ENCODE measurements at regions of chr9 and their contacts with region 1.

Region 1: GRCh38 chr9:1837449-1838084 is 177.6 kb upstream of the SMARCA2 start:
- DNase-seq: peak; percentile 55 to 61
- H3K4me3 ChIP-seq: no peak overlapping the region
- H3K4me3 Mint-ChIP-seq: no peak overlapping the region
- H3K27ac Mint-ChIP-seq: no peak overlapping the region
- H3K4me1 ChIP-seq: no peaks in the 10 kb centered on the region
- H3K4me1 Mint-ChIP-seq: no peaks in the 10 kb centered on the region
- H3K27me3 ChIP-seq: no peaks in the 10 kb centered on the region
- H3K27me3 Mint-ChIP-seq: peaks cover 2% of the 10 kb centered on the region
- CTCF ChIP-seq: peak; percentile 58 to 66

Region 2: GRCh38 chr9:1709345-1709744 is 128.2 kb before region 1 on chr9:
- CTCF ChIA-PET with region 1: no interaction called
- POLR2A ChIA-PET with region 1: no interaction called
- intact Hi-C with region 1: loop called (anchors 1 kb)
- DNase-seq: peak in 1 of 2 experiments; percentile 13
- H3K4me3 ChIP-seq: no peak overlapping the region
- H3K4me3 Mint-ChIP-seq: no peak overlapping the region
- H3K27ac Mint-ChIP-seq: no peak overlapping the region
- H3K4me1 ChIP-seq: no peaks in the 10 kb centered on the region
- H3K4me1 Mint-ChIP-seq: no peaks in the 10 kb centered on the region
- H3K27me3 ChIP-seq: no peaks in the 10 kb centered on the region
- H3K27me3 Mint-ChIP-seq: peaks cover 7% of the 10 kb centered on the region
- CTCF ChIP-seq: peak in 1 of 2 experiments; percentile 58

Region 3: GRCh38 chr9:1726993-1727759 is 110.4 kb before region 1 on chr9:
- CTCF ChIA-PET with region 1: interaction called, 22 read pairs
- POLR2A ChIA-PET with region 1: no interaction called
- intact Hi-C with region 1: loop called (anchors 1 kb)
- DNase-seq: peak; percentile 26 to 34
- H3K4me3 ChIP-seq: no peak overlapping the region
- H3K4me3 Mint-ChIP-seq: no peak overlapping the region
- H3K27ac Mint-ChIP-seq: no peak overlapping the region
- H3K4me1 ChIP-seq: no peaks in the 10 kb centered on the region
- H3K4me1 Mint-ChIP-seq: no peaks in the 10 kb centered on the region
- H3K27me3 ChIP-seq: no peaks in the 10 kb centered on the region
- H3K27me3 Mint-ChIP-seq: peaks cover 8% of the 10 kb centered on the region
- CTCF ChIP-seq: peak; percentile 32 to 33

Region 4: GRCh38 chr9:2889023-2889422 is 1051.5 kb after region 1 on chr9:
- CTCF ChIA-PET with region 1: no interaction called
- POLR2A ChIA-PET with region 1: no interaction called
- intact Hi-C with region 1: no loop called
- DNase-seq: no peak
- H3K4me3 ChIP-seq: no peak overlapping the region
- H3K4me3 Mint-ChIP-seq: no peak overlapping the region
- H3K27ac Mint-ChIP-seq: no peak overlapping the region
- H3K4me1 ChIP-seq: no peaks in the 10 kb centered on the region
- H3K4me1 Mint-ChIP-seq: no peaks in the 10 kb centered on the region
- H3K27me3 ChIP-seq: no peaks in the 10 kb centered on the region
- H3K27me3 Mint-ChIP-seq: peaks cover 8% of the 10 kb centered on the region
- CTCF ChIP-seq: no peak

Measured in Caco-2 (cell line).